ENCODE measurements at regions of chr12 and their contacts with region 1.

Region 1: DNA sequence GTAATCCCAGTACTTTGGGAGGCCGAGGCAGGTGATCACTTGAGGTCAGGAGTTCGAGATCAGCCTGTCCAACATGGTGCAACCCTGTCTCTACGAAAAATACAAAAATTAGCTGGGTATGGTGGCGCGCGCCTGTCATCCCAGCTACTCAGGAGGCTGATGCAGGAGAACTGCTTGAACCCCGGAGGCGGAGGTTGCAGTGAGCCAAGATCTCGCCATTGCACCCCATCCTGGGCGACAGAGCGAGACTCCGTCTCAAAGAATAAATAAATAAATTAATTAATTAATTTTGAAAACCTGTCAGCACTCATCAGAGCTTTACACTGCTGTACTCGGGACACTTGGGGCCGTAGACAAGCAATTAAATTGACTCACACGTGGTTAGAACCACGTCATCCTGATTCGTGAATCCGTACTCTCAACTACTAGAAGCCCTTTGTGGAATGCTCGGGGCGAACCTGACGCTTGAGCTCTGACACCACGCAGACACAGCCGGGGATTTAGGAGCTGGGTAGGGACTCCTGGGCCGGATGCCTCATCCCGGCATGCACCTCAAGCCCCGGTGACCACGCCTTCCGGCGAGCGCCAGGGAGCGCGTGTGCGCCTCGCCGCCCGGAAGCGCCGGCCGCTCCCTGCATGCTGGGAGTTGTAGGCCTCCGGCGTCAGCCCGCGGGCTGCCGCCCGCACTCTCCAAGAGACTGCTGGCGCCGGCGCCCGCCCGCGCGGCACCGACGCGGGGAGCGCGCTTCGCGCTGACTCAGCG is at the start of gene XPOT:
- DNase-seq: peak; percentile 96 to 98
- ATAC-seq: peak; percentile 95 to 96 (median 96)
- H3K4me3 ChIP-seq: peak within 1 kb of the TSS; percentile 99
- H3K27ac ChIP-seq: peak within 1 kb of the TSS; percentile 99
- H3K4me1 ChIP-seq: peaks cover 8% of the 10 kb centered on the region
- H3K27me3 ChIP-seq: no peaks in the 10 kb centered on the region
- CTCF ChIP-seq: no peak
- total RNA-seq, gene XPOT: 23.9 to 41.5 (median 31.7) TPM

Region 2: GRCh38 chr12:64222009-64222765 is 181.7 kb before region 1 on chr12 and contains the start of gene KICS2:
- intact Hi-C with region 1: loop called in 1 of 2 experiments (anchors 10 kb)
- DNase-seq: peak; percentile 95 to 97
- ATAC-seq: peak; percentile 99 to 100 (median 100)
- H3K4me3 ChIP-seq: peak within 1 kb of the TSS; percentile 95
- H3K27ac ChIP-seq: peak within 1 kb of the TSS; percentile 97
- H3K4me1 ChIP-seq: peaks cover 4% of the 10 kb centered on the region
- H3K27me3 ChIP-seq: no peaks in the 10 kb centered on the region
- CTCF ChIP-seq: no peak
- total RNA-seq, gene KICS2: 8.5 to 18.2 (median 10.3) TPM

Measured in psoas muscle (tissue), 8 donors.